Right ventricle myocardium superior (tissue), 1 donor: ENCODE measurements at regions of chr11 and their contacts with region 1.

Region 1: GRCh38 chr11:12224537-12224893 is 114.1 kb downstream of the MICAL2 start:
- DNase-seq: peak; percentile 88
- ATAC-seq: peak; percentile 11

Region 2: DNA sequence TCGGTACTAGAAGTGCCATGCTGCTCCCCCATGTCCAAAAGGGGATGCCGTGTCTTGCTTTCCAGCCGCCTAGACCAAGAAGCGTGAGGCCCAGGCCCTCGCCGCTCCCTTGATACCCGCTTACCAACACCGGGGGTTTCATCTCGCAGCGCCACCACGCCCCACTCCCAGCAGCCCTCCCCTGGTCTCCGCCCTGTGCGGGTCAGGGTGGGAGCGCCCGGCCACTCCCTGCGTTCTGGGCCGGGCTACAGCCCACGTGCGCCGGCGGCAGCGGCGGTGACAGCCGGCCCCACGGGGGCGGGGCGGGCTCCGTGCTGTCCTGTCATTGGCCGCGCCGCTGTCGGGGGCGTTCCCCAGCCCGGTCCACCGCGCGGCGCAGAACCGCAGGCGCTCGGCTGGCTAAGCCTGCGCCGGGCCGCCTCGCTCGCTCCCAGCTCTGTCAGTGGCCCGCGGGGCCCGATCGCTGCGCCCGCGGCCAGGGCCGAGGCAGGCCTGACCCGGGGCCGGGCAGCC is 114.3 kb before region 1 on chr11 and contains the start of gene MICAL2:
- intact Hi-C with region 1: no loop called
- DNase-seq: peak; percentile 94
- ATAC-seq: peak; percentile 98
- total RNA-seq, gene MICAL2: 34.8 TPM

Region 3: DNA sequence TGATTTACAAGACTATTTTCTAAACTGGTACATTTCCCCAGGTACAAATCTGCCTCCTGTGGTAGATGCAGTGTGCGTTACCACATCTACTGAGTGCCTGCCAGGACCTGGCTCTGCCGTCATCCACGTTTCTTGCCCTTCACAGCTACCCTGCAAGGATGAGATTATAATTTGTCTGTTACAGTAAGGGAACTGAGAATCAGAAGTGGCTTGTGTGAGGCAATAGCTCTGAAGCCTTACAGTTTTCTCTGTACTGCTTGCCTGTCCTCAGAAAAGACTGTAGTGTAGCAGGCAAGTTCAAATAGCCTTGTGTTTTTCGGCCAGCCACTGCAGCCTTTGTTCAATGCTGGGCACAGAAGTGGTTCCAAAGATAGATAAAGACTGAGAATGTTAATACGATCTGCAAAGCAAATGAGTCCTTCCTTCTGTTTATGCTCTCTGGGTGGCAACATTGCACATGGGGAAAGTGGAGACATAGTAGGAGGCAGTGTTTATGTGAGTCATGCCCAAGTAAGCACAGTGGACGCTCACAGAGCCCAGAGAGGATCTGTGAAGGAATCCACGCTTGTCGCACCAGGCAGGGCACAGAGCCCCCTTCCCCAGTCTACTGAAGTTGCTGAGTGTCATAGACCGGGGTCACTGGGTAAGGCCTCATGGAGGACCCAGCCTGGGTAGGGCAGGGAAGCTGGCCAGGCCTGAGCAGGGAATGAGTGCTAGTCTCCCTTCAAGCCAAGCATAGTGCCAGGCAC is 65.0 kb before region 1 on chr11:
- intact Hi-C with region 1: loop called (anchors 10 kb)
- DNase-seq: no peak
- ATAC-seq: peak; percentile 21

Region 4: GRCh38 chr11:12235947-12236743 is 11.6 kb after region 1 on chr11:
- intact Hi-C with region 1: loop called (anchors 2 kb)
- DNase-seq: no peak
- ATAC-seq: peak; percentile 63

Region 5: GRCh38 chr11:12430955-12431354 is 206.4 kb after region 1 on chr11:
- intact Hi-C with region 1: no loop called
- DNase-seq: peak; percentile 62
- ATAC-seq: peak; percentile 59